Right lobe of liver (tissue), 6 donors: ENCODE measurements at regions of chr14 and their contacts with region 1.

Region 1: DNA sequence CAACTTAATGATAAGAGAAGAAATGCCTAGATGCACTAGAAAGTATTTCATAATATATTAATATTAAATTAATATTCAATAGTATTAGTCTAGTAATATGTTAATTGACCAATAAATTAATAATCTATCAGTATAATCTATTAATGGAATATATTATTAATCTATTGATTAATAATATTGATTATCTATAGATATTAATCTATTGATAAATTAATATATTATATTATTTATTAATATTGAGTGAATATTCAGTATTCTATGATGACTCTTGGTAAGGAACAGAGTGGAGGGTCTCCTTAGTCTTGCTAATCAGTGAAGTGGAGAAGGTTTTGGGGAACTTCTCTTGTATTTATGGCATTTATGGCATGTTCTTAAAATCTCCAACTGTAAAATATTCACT is 679.4 kb upstream of the FLRT2 start:
- DNase-seq: no peak
- ATAC-seq: no peak
- H3K4me3 ChIP-seq: no peak overlapping the region
- H3K27ac ChIP-seq: no peak overlapping the region
- H3K4me1 ChIP-seq: no peaks in the 10 kb centered on the region
- H3K27me3 ChIP-seq: no peaks in the 10 kb centered on the region
- CTCF ChIP-seq: no peak
- POLR2A ChIP-seq: no peak

Region 2: DNA sequence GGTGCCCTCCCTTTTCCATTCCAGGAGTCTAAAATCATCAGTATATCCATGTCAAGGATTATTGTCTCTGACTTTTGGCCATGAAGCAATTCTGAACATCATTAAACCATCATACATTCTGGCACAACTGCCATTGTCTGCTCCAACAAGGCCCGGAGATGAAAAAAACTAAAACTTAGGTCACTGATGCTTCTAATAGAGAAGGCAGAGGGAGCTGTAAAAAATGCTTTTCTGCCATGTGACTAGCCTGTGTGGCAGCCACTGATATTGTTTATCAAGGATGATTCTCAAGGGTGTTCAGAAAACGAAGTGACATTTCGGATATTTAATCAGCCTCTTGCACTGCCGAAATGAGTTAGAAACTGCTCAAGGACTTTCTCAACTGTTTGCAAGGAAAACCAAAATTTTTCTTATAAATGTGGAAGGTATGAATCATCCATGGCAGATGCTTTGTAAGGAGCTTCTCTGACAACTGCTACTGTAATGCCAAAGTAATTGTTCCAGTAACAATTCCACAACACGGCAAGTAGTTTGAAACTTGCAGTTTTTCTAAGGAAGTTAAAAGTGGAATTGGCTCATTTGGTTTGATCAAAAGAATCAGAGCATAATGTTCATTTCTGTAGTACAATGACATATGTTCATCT is 397.1 kb before region 1 on chr14:
- intact Hi-C with region 1: no loop called
- DNase-seq: no peak
- ATAC-seq: no peak
- H3K4me3 ChIP-seq: no peak overlapping the region
- H3K27ac ChIP-seq: no peak overlapping the region
- H3K4me1 ChIP-seq: no peaks in the 10 kb centered on the region
- H3K27me3 ChIP-seq: no peaks in the 10 kb centered on the region
- CTCF ChIP-seq: no peak
- POLR2A ChIP-seq: no peak

Region 3: DNA sequence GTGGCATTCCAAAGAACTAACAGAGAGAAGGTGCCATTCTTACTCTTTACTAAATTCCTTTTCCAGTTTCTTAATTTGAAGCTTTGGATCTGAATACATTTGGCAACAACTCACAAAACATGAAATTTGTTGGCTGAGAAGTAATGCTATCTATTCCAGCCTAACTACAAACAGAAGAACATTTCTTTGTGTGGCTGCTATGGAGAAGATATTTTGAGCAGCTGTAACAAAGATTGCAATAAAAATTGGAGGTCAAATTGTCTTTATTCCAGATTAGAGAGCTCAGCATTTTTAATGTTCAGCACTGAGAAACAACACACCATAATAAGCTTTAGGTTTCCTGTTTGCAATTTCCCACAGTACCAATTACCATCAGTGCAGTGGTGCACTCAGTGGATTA is 156.4 kb before region 1 on chr14:
- intact Hi-C with region 1: loop called in 1 of 2 experiments (anchors 10 kb)
- DNase-seq: no peak
- ATAC-seq: no peak
- H3K4me3 ChIP-seq: no peak overlapping the region
- H3K27ac ChIP-seq: no peak overlapping the region
- H3K4me1 ChIP-seq: no peaks in the 10 kb centered on the region
- H3K27me3 ChIP-seq: no peaks in the 10 kb centered on the region
- CTCF ChIP-seq: no peak
- POLR2A ChIP-seq: no peak